Right cardiac atrium (tissue), 5 donors: ENCODE measurements at regions of chr2 and their contacts with region 1.

Region 1: DNA sequence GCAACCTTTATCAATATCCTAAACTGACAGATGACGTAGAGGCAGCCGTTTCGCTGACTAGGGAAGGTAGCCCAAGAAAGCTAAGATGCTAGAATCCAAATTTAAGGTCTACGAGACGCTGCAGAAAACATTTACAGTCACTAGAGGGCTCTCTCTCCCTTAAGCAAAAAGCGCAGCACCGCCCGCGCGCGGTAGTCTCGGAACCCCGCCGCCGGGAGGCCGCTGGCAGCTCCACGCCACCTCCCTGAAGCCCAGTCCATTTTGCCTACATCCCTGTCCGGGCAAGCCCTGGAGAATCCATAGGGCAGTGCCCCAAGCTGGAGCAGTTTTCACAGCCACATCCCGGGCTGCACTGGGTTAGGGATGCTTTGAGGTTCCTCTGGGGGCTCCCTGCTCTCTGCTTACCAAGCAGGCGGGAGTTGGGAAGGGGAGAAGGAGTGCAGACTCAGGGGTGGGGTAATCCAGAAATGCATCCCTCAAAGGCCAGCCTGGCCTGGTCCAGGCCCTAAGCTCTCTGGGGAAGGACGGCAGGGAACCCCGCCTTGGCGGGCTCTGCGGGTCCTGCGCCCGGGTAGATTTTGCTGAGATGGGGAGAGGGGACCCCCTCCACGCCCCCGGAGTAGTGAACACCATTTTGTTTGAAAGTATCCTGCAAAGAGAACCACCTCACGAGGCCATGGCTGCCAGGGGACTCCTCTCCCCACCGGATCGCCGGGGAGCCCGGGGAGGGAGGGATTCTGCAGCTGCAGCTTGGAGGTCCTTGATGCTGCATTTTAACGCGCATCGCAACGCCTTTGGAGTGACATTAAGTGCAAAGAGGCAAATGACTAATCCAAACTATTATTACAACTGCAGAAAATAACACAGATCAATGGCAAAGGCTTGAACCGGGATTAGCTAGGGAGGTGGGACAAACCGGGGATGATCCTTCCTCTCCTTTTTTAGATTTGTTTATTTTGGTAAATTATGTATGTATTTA is 1.3 kb upstream of the DPYSL5 start:
- DNase-seq: peak; percentile 73 to 89 (median 86)
- ATAC-seq: peak; percentile 67 to 83
- H3K4me3 ChIP-seq: no peak overlapping the region
- H3K27ac ChIP-seq: no peak overlapping the region
- H3K4me1 ChIP-seq: no peaks in the 10 kb centered on the region
- H3K27me3 ChIP-seq: no peaks in the 10 kb centered on the region

Region 2: GRCh38 chr2:26922405-26923188 is 76.0 kb after region 1 on chr2:
- intact Hi-C with region 1: loop called in 3 of 4 experiments (anchors 2 to 5 kb)
- DNase-seq: peak in 1 of 3 donors; percentile 27
- ATAC-seq: peak; percentile 69 to 72
- H3K4me3 ChIP-seq: no peak overlapping the region
- H3K27ac ChIP-seq: no peak overlapping the region
- H3K4me1 ChIP-seq: no peaks in the 10 kb centered on the region
- H3K27me3 ChIP-seq: no peaks in the 10 kb centered on the region

Region 3: DNA sequence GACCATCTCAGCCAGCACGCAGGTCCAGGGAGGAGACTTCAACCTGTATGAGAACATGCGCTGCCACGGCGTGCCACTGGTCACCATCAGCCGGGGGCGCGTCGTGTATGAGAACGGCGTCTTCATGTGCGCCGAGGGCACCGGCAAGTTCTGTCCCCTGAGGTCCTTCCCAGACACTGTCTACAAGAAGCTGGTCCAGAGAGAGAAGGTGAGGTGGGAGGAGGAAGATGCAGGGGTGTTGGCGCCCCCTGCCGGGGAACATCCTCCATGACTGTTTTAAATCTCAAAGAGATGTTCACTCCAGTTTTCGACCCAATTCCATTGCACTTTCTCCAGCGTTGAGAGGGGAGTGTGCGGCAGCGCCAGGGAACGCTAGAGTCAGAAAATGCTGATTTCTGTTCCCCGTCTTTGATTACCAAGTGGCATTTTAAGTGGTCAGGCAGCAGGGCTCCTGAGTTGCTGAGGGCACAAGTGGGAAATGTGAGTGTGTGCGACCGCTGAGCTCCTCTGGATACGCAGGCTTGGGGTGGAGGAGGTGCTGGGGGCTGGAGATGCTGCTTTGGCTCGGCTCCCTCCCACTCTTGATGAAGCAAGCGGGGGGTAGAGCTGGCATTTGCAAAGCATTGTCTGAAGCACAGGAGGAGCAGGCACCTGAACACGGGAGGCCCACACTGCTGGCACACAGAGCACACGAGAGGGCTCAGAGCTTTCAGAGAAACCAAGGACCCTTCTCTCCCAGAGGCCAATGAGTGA is 96.1 kb after region 1 on chr2:
- intact Hi-C with region 1: loop called (anchors 2 to 5 kb)
- DNase-seq: peak; percentile 62 to 86 (median 74)
- ATAC-seq: peak in 1 of 2 donors; percentile 40
- H3K4me3 ChIP-seq: no peak overlapping the region
- H3K27ac ChIP-seq: no peak overlapping the region
- H3K4me1 ChIP-seq: no peaks in the 10 kb centered on the region
- H3K27me3 ChIP-seq: no peaks in the 10 kb centered on the region

Region 4: GRCh38 chr2:26959331-26959730 is 112.7 kb after region 1 on chr2:
- intact Hi-C with region 1: no loop called
- DNase-seq: no peak
- ATAC-seq: no peak
- H3K4me3 ChIP-seq: no peak overlapping the region
- H3K27ac ChIP-seq: no peak overlapping the region
- H3K4me1 ChIP-seq: no peaks in the 10 kb centered on the region
- H3K27me3 ChIP-seq: no peaks in the 10 kb centered on the region

Region 5: GRCh38 chr2:27303093-27304025 is 456.7 kb after region 1 on chr2:
- intact Hi-C with region 1: no loop called
- DNase-seq: peak in 2 of 3 donors; percentile 39 to 65
- ATAC-seq: peak; percentile 49 to 66
- H3K4me3 ChIP-seq: no peak overlapping the region
- H3K27ac ChIP-seq: peak overlapping the region; percentile 30
- H3K4me1 ChIP-seq: no peaks in the 10 kb centered on the region
- H3K27me3 ChIP-seq: no peaks in the 10 kb centered on the region